ENCODE measurements at regions of chr1 and their contacts with region 1.

Region 1: DNA sequence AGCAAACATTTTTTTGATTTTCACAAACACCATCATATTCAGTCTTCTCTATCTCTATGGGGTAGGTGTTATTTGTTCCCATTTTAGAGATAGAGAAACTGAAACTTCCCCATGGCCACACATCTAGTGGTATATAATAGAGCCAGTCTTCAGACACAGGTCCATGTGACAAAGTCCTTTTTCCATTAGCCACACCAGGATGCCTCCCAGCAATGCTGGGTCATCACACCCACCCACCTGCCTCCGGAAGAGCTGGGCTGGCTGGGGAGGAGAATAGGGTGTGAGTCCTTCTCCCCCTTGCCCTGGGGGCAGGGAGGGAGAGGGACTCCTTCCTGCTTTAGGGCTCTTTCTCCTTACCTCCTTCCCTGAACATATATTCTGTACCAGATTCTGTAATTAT is 29.8 kb downstream of the SOX13 start:
- DNase-seq: no peak
- H3K4me3 ChIP-seq: no peak overlapping the region
- H3K4me3 Mint-ChIP-seq: peak overlapping the region in 7 of 8 donors; percentile 64 to 88 (median 71)
- H3K27ac ChIP-seq: no peak overlapping the region
- H3K27ac Mint-ChIP-seq: peak overlapping the region; percentile 78 to 94 (median 86)
- H3K4me1 ChIP-seq: peaks cover 39% of the 10 kb centered on the region
- H3K4me1 Mint-ChIP-seq: peaks cover 22 to 71% (median 35%) of the 10 kb centered on the region in 4 donors
- H3K27me3 ChIP-seq: no peaks in the 10 kb centered on the region
- H3K27me3 Mint-ChIP-seq: no peaks in the 10 kb centered on the region

Region 2: GRCh38 chr1:203937644-203938330 is 164.9 kb before region 1 on chr1:
- CTCF ChIA-PET with region 1: no interaction called
- POLR2A ChIA-PET with region 1: no interaction called
- intact Hi-C with region 1: no loop called
- DNase-seq: no peak
- H3K4me3 ChIP-seq: no peak overlapping the region
- H3K4me3 Mint-ChIP-seq: no peak overlapping the region
- H3K27ac ChIP-seq: no peak overlapping the region
- H3K27ac Mint-ChIP-seq: no peak overlapping the region
- H3K4me1 ChIP-seq: no peaks in the 10 kb centered on the region
- H3K4me1 Mint-ChIP-seq: no peaks in the 10 kb centered on the region
- H3K27me3 ChIP-seq: no peaks in the 10 kb centered on the region
- H3K27me3 Mint-ChIP-seq: peaks cover 10% of the 10 kb centered on the region in 2 donors

Region 3: GRCh38 chr1:204072931-204073836 is 29.5 kb before region 1 on chr1 and contains the start of gene SOX13:
- CTCF ChIA-PET with region 1: no interaction called
- POLR2A ChIA-PET with region 1: interaction called, 9 read pairs
- intact Hi-C with region 1: loop called (anchors 2 kb)
- DNase-seq: peak in 4 of 5 donors; percentile 7 to 22 (median 18)
- H3K4me3 ChIP-seq: peak within 1 kb of the TSS; percentile 23 to 26
- H3K4me3 Mint-ChIP-seq: peak within 1 kb of the TSS; percentile 88 to 93 (median 90)
- H3K27ac ChIP-seq: no peak within 1 kb of the TSS
- H3K27ac Mint-ChIP-seq: peak within 1 kb of the TSS in 6 of 7 donors; percentile 14 to 72 (median 54)
- H3K4me1 ChIP-seq: peaks cover 20% of the 10 kb centered on the region
- H3K4me1 Mint-ChIP-seq: peaks cover 13 to 48% (median 18%) of the 10 kb centered on the region in 4 donors
- H3K27me3 ChIP-seq: peaks cover 18% of the 10 kb centered on the region
- H3K27me3 Mint-ChIP-seq: peaks cover 21 to 37% of the 10 kb centered on the region in 2 donors
- total RNA-seq, gene SOX13: 9.1 to 12.0 TPM

Region 4: DNA sequence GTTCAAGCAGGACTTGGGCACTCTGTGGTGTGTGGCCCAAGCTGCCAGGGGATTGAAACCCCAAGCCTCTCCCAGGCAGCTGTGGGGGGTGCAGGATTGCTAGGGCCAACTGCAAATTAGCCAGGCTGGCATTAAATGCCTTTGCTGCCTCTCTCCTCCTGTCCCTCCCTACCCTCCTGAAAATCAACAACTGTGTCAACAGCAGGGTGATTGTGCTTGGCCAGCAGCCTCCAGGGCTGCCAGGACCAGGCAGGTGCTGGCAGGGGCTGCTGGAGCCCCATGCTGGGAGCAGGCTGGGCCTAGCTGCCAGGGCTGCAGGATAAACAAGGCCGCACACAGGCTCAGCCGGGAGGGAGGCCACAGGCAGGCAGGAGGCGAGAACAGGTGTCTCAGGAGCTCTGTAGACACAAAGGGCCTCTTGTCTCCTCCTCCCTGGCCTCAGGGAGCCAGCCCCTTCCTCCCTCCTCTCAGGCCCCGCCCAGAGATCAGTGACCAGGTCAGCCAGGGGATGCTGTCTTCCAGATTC is 18.4 kb before region 1 on chr1:
- CTCF ChIA-PET with region 1: no interaction called
- POLR2A ChIA-PET with region 1: no interaction called
- intact Hi-C with region 1: no loop called
- DNase-seq: no peak
- H3K4me3 ChIP-seq: no peak overlapping the region
- H3K4me3 Mint-ChIP-seq: no peak overlapping the region
- H3K27ac ChIP-seq: no peak overlapping the region
- H3K27ac Mint-ChIP-seq: peak overlapping the region in 1 of 7 donors; percentile 48
- H3K4me1 ChIP-seq: no peaks in the 10 kb centered on the region
- H3K4me1 Mint-ChIP-seq: peaks cover 1 to 24% (median 7%) of the 10 kb centered on the region in 4 donors
- H3K27me3 ChIP-seq: no peaks in the 10 kb centered on the region
- H3K27me3 Mint-ChIP-seq: no peaks in the 10 kb centered on the region

Measured in CD4-positive, alpha-beta memory T cell (primary cell).